Activated B cell treated with CpG ODN at 0.5 μM for 24 hours (primary cell): ENCODE measurements at regions of chr9 and their contacts with region 1.

Region 1: GRCh38 chr9:112559629-112560413 is 73.2 kb downstream of the KIAA1958 start:
- DNase-seq: no peak
- ATAC-seq: no peak
- H3K4me3 Mint-ChIP-seq: no peak overlapping the region
- H3K27ac Mint-ChIP-seq: no peak overlapping the region
- H3K4me1 Mint-ChIP-seq: peaks cover 3% of the 10 kb centered on the region
- H3K27me3 Mint-ChIP-seq: no peaks in the 10 kb centered on the region
- CTCF ChIP-seq: no peak

Region 2: GRCh38 chr9:112465352-112465751 is 94.5 kb before region 1 on chr9:
- CTCF ChIA-PET with region 1: no interaction called
- POLR2A ChIA-PET with region 1: no interaction called
- intact Hi-C with region 1: no loop called
- DNase-seq: no peak
- ATAC-seq: no peak
- H3K4me3 Mint-ChIP-seq: no peak overlapping the region
- H3K27ac Mint-ChIP-seq: no peak overlapping the region
- H3K4me1 Mint-ChIP-seq: no peaks in the 10 kb centered on the region
- H3K27me3 Mint-ChIP-seq: no peaks in the 10 kb centered on the region
- CTCF ChIP-seq: no peak

Region 3: GRCh38 chr9:112582371-112583262 is 22.8 kb after region 1 on chr9:
- CTCF ChIA-PET with region 1: no interaction called
- POLR2A ChIA-PET with region 1: interaction called, 10 read pairs
- intact Hi-C with region 1: no loop called
- DNase-seq: no peak
- ATAC-seq: no peak
- H3K4me3 Mint-ChIP-seq: no peak overlapping the region
- H3K27ac Mint-ChIP-seq: no peak overlapping the region
- H3K4me1 Mint-ChIP-seq: no peaks in the 10 kb centered on the region
- H3K27me3 Mint-ChIP-seq: no peaks in the 10 kb centered on the region
- CTCF ChIP-seq: no peak